Activated T-helper 2 cell treated with anti-CD3 and anti-CD28 coated beads, Interferon-gamma antibody, Interleukin-2, Interleukin-4, amounts not matched to agents 10 μg/mL and 5 μg/mL and 100 μg/mL, durations not matched to agents 14 hours and 24 hours and 36 hours (primary cell): ENCODE measurements at regions of chr3 and their contacts with region 1.

Region 1: GRCh38 chr3:188257384-188258026 is 103.5 kb downstream of the LPP start:
- DNase-seq: no peak
- H3K4me3 Mint-ChIP-seq: no peak overlapping the region
- H3K27ac Mint-ChIP-seq: peak overlapping the region; percentile 70
- H3K4me1 Mint-ChIP-seq: peaks cover 57% of the 10 kb centered on the region
- H3K27me3 Mint-ChIP-seq: no peaks in the 10 kb centered on the region

Region 2: GRCh38 chr3:187974871-187975271 is 282.6 kb before region 1 on chr3:
- intact Hi-C with region 1: loop called (anchors 2 kb)
- DNase-seq: peak; percentile 20
- H3K4me3 Mint-ChIP-seq: peak overlapping the region; percentile 72
- H3K27ac Mint-ChIP-seq: peak overlapping the region; percentile 93
- H3K4me1 Mint-ChIP-seq: peaks cover 68% of the 10 kb centered on the region
- H3K27me3 Mint-ChIP-seq: no peaks in the 10 kb centered on the region

Region 3: DNA sequence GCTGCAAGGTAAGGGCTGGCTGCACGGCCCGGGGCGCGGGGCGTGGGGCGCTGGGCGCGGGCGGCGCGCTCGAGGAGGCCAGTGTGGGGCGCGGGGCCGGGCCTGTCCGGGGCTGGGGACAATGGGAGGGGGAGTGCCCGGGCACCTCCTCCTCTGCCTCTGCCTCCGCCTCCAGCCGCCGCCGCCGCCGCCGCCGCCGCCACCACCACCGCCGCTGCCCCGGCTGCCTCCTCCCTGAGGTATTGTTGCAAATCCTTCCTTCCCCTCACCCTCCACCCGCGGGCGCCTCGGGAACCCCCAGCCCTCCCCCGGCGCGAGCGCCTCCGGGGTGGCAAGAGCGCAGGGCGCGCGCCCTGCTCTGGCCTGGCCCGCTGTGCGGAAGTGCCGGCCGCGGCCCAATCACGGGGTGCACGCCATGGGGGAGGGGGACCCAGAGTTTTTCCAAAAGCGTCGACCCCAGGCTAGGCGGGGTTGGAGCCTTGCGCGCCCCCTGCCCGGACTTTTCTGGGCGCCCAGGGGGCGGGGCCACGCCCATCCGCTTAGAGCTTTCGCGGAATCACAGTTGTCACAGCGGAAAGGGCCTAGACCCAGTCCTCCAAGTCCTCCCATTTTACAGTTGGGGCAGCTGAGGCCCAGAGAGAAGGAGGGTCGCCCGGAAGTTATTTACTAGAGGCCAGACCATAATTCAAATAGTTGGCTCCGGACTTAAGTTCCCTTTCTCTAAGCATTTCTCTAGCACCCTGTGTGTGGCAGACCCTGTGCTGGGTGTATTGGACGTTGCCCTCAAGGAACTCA is 103.3 kb before region 1 on chr3 and contains the start of gene LPP:
- intact Hi-C with region 1: loop called (anchors 2 kb)
- DNase-seq: peak; percentile 87
- H3K4me3 Mint-ChIP-seq: peak within 1 kb of the TSS; percentile 91
- H3K27ac Mint-ChIP-seq: peak within 1 kb of the TSS; percentile 93
- H3K4me1 Mint-ChIP-seq: peaks cover 63% of the 10 kb centered on the region
- H3K27me3 Mint-ChIP-seq: no peaks in the 10 kb centered on the region
- total RNA-seq, gene LPP: 54.5 and 59.0 TPM in 2 replicates

Region 4: GRCh38 chr3:188212308-188212969 is 45.1 kb before region 1 on chr3:
- intact Hi-C with region 1: loop called (anchors 5 kb)
- DNase-seq: no peak
- H3K4me3 Mint-ChIP-seq: no peak overlapping the region
- H3K27ac Mint-ChIP-seq: no peak overlapping the region
- H3K4me1 Mint-ChIP-seq: peaks cover 16% of the 10 kb centered on the region
- H3K27me3 Mint-ChIP-seq: no peaks in the 10 kb centered on the region

Region 5: DNA sequence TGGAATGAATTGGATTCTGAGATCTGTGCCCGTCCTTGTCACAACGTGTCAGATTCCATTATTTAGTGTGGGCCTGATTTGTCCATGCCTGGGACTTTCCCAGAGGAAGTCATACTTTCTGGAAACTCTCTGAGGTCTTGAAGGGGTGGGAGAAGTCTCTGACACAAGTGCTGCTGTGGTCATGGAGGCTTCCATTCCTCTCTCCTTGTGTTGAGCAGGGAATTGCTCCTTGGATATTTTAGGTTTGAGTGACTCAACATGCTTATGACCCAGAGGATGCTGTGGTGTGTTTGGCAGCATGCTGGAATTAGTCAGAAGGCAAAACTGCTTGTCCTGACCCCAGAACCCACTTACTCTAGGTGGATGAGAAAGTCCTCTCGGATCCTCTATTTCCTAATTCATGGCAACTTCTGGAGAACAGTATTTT is 28.6 kb after region 1 on chr3:
- intact Hi-C with region 1: loop called (anchors 1 kb)
- DNase-seq: no peak
- H3K4me3 Mint-ChIP-seq: no peak overlapping the region
- H3K27ac Mint-ChIP-seq: peak overlapping the region; percentile 5
- H3K4me1 Mint-ChIP-seq: peaks cover 52% of the 10 kb centered on the region
- H3K27me3 Mint-ChIP-seq: no peaks in the 10 kb centered on the region

Region 6: GRCh38 chr3:188339410-188340295 is 82.1 kb after region 1 on chr3:
- intact Hi-C with region 1: loop called (anchors 1 kb)
- DNase-seq: peak; percentile 19
- H3K4me3 Mint-ChIP-seq: peak overlapping the region; percentile 66
- H3K27ac Mint-ChIP-seq: peak overlapping the region; percentile 89
- H3K4me1 Mint-ChIP-seq: peaks cover 29% of the 10 kb centered on the region
- H3K27me3 Mint-ChIP-seq: no peaks in the 10 kb centered on the region

Region 7: GRCh38 chr3:188370081-188370830 is 112.8 kb after region 1 on chr3:
- intact Hi-C with region 1: no loop called
- DNase-seq: no peak
- H3K4me3 Mint-ChIP-seq: no peak overlapping the region
- H3K27ac Mint-ChIP-seq: no peak overlapping the region
- H3K4me1 Mint-ChIP-seq: peaks cover 4% of the 10 kb centered on the region
- H3K27me3 Mint-ChIP-seq: no peaks in the 10 kb centered on the region

Region 8: DNA sequence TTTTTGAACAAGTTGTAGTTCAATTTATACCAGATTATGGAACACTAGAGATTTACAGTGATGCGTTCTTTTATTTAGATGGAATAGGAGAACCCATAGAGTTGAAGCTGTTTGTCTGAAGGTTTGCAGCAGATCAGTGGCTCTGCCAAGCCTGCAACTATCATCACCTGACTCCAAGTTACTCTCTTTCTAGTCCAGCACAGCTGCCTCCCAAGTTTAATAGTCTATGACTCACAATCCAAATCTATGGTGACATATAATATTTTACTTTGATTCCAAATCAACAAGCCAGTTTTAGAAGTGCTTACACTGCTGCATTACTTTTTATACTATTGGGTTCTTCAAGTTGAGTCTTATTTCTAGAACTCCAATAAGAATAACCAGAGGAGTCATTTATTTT is 296.9 kb after region 1 on chr3:
- intact Hi-C with region 1: loop called (anchors 1 kb)
- DNase-seq: no peak
- H3K4me3 Mint-ChIP-seq: no peak overlapping the region
- H3K27ac Mint-ChIP-seq: no peak overlapping the region
- H3K4me1 Mint-ChIP-seq: peaks cover 35% of the 10 kb centered on the region
- H3K27me3 Mint-ChIP-seq: no peaks in the 10 kb centered on the region